ENCODE measurements at regions of chr11 and their contacts with region 1.

Region 1: DNA sequence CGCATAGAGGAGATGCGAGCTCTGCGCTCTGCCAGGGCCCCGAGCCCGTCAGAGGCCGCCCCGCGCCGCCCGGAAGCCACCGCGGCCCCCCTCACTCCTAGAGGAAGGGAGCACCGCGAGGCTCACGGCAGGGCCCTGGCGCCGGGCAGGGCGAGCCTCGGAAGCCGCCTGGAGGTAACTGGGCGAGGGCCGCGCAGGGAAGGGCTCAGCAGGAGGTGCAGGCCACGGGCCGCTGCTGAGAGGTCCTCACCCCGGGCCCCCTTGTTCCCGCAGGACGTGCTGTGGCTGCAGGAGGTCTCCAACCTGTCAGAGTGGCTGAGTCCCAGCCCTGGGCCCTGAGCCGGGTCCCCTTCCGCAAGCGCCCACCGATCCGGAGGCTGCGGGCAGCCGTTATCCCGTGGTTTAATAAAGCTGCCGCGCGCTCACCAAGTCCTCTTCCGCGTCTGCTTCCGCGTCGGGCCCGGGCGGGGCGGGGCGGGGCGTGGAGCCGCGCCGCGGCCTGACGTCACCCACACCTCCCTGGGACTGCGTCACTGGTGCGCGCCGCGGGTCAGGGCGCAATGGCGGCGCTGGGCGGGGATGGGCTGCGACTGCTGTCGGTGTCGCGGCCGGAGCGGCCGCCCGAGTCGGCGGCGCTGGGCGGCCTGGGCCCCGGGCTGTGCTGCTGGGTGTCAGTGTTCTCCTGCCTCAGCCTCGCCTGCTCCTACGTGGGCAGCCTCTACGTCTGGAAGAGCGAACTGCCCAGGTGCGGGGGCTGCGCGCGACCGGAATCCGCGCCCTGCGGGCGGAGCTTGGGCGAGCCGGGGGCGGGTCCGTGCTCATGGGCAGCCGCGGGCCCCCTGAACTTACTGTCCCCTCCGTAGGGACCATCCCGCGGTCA is at the start of gene RCE1:
- DNase-seq: peak; percentile 85 to 93 (median 90)
- H3K4me3 ChIP-seq: peak within 1 kb of the TSS; percentile 88 to 96
- H3K4me3 Mint-ChIP-seq: peak within 1 kb of the TSS; percentile 87 to 96 (median 93)
- H3K27ac ChIP-seq: peak within 1 kb of the TSS; percentile 97
- H3K27ac Mint-ChIP-seq: peak within 1 kb of the TSS; percentile 91 to 98 (median 96)
- H3K4me1 ChIP-seq: peaks cover 50% of the 10 kb centered on the region
- H3K4me1 Mint-ChIP-seq: peaks cover 33 to 55% (median 44%) of the 10 kb centered on the region in 4 donors
- H3K27me3 ChIP-seq: no peaks in the 10 kb centered on the region
- H3K27me3 Mint-ChIP-seq: no peaks in the 10 kb centered on the region
- total RNA-seq, gene RCE1: 30.0 to 34.5 TPM

Region 2: DNA sequence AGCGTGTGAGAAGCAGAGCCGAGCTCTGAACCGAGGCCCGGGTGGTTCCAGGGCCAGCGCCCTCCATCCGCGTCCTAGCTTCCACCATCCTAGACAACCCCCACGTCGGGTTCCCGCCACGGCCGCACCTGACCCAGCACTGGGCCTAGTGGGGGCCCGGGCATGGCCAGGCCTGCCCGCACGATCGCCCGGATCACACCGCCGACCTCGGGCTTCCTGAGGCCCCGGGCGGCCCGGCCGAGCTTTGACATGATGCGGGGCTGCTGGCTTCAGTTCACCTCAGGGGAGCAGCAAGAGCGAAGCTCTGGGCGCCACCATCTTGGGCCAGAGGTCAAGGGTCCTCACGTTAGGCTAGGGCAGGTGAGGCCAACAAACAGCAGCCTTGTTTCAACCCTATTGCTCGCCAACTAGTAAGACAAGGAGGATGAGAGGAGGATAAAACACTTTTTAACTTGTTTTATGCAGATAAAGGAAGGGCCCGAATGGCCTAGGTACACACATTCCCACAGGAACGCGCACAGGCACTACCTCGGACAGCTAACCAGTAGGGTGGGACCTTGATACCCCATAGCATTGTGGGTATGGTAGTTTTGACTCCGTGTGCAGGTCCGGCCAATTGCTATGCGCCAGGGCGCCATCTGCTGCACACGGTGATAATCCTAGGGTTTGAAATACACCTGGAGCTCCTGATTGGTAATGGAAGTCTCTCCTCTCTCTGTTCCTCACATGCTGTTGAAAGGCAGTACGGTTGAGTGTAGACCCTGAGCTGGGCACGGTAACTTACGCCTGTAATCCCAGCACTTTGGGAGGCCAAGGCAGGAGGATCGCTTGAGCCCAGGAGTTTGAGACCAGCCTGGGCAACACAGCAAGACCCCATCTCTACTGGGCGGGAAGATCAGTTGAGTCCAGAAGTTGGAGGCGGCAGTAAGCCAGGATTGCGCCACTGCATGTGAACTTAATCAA is 404.4 kb before region 1 on chr11 and contains the start of gene MRPL11:
- CTCF ChIA-PET with region 1: no interaction called
- POLR2A ChIA-PET with region 1: interaction called, 10 read pairs
- intact Hi-C with region 1: loop called (anchors 2 kb)
- DNase-seq: peak; percentile 89 to 92 (median 91)
- H3K4me3 ChIP-seq: peak within 1 kb of the TSS; percentile 67 to 88
- H3K4me3 Mint-ChIP-seq: peak within 1 kb of the TSS; percentile 87 to 94 (median 91)
- H3K27ac ChIP-seq: peak within 1 kb of the TSS; percentile 69
- H3K27ac Mint-ChIP-seq: peak within 1 kb of the TSS; percentile 88 to 100 (median 98)
- H3K4me1 ChIP-seq: peaks cover 7% of the 10 kb centered on the region
- H3K4me1 Mint-ChIP-seq: peaks cover 6 to 17% (median 11%) of the 10 kb centered on the region in 4 donors
- H3K27me3 ChIP-seq: no peaks in the 10 kb centered on the region
- H3K27me3 Mint-ChIP-seq: peaks cover 2 to 3% of the 10 kb centered on the region in 2 donors
- total RNA-seq, gene MRPL11: 22.0 to 27.9 TPM

Region 3: DNA sequence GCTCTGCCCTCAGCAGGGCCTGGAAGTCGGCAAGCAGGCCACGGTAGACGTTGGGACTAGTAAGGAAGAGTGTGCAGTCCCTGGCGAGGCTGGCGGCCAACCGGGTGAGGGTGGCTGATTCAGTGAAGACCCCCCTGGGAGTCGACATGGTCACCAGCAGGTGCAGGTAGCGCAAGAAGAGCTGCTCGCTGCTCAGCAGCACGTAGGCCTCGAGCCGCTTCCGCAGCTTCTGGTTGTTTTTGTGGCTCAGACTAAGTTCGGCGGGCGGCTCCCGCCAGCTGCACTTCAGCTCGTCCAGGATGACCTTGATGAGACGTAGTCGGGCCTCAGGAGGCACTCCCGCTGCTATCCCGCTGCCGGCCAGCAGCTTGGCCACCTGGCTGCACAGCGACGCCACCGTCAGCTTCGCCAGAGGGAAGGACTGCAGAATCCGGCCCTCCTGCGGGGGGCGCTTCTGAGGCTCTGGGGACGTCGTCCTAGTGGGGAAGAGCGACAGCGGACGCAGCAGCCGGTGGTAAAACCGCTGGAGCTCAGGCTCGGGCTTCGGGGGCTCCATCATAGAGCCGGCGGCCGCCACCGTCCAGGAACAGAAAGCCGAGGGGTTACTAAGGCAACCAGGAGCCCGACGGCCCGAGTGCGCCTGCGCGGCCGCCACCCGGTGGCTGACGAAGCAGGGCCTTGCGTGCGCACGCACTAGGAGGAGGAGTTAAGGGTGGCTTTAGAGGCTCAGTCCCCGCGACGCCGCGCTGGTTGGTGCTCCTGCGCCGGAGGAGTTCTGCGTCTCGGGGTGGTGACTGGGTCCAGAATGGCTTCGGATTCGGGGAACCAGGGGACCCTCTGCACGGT is 250.5 kb before region 1 on chr11 and contains the starts of genes CCDC87 and CCS:
- CTCF ChIA-PET with region 1: no interaction called
- POLR2A ChIA-PET with region 1: no interaction called
- intact Hi-C with region 1: loop called (anchors 2 kb)
- DNase-seq: peak; percentile 95 to 98 (median 97)
- H3K4me3 ChIP-seq: peak within 1 kb of the TSS; percentile 71 to 98
- H3K4me3 Mint-ChIP-seq: peak within 1 kb of the TSS; percentile 98 to 100 (median 99)
- H3K27ac ChIP-seq: peak within 1 kb of the TSS; percentile 88
- H3K27ac Mint-ChIP-seq: peak within 1 kb of the TSS; percentile 96 to 100 (median 100)
- H3K4me1 ChIP-seq: peaks cover 35% of the 10 kb centered on the region
- H3K4me1 Mint-ChIP-seq: peaks cover 16 to 42% (median 27%) of the 10 kb centered on the region in 4 donors
- H3K27me3 ChIP-seq: no peaks in the 10 kb centered on the region
- H3K27me3 Mint-ChIP-seq: no peaks in the 10 kb centered on the region
- total RNA-seq, gene CCDC87: not detected
- total RNA-seq, gene CCS: 61.0 to 61.5 TPM

Region 4: GRCh38 chr11:66694732-66695207 is 148.4 kb before region 1 on chr11:
- CTCF ChIA-PET with region 1: interaction called, 13 read pairs
- POLR2A ChIA-PET with region 1: no interaction called
- intact Hi-C with region 1: no loop called
- DNase-seq: peak; percentile 76 to 86 (median 79)
- H3K4me3 ChIP-seq: no peak overlapping the region
- H3K4me3 Mint-ChIP-seq: no peak overlapping the region
- H3K27ac ChIP-seq: no peak overlapping the region
- H3K27ac Mint-ChIP-seq: no peak overlapping the region
- H3K4me1 ChIP-seq: no peaks in the 10 kb centered on the region
- H3K4me1 Mint-ChIP-seq: no peaks in the 10 kb centered on the region
- H3K27me3 ChIP-seq: no peaks in the 10 kb centered on the region
- H3K27me3 Mint-ChIP-seq: peaks cover 2% of the 10 kb centered on the region in 2 donors

Region 5: DNA sequence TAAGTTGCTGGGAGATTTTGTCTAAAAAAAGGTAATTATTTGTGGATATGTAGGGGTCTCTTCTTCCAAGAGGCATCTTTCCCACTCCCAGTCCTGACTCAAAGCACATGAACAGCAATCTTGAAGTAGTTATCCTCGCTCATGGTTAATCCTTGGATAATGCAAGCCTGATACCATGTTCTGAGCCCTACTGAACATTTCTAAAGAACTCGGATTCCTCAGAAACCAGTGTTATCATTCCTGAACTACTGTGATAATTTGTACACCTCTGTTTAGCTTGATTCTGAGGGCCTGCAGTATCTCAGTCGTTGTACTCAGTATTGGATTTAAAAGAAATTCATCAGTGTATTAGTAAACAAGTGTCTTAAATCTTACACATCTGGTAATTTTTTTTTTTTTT is 22.2 kb before region 1 on chr11:
- CTCF ChIA-PET with region 1: no interaction called
- POLR2A ChIA-PET with region 1: no interaction called
- intact Hi-C with region 1: no loop called
- DNase-seq: no peak
- H3K4me3 ChIP-seq: no peak overlapping the region
- H3K4me3 Mint-ChIP-seq: no peak overlapping the region
- H3K27ac ChIP-seq: no peak overlapping the region
- H3K27ac Mint-ChIP-seq: no peak overlapping the region
- H3K4me1 ChIP-seq: no peaks in the 10 kb centered on the region
- H3K4me1 Mint-ChIP-seq: no peaks in the 10 kb centered on the region
- H3K27me3 ChIP-seq: no peaks in the 10 kb centered on the region
- H3K27me3 Mint-ChIP-seq: no peaks in the 10 kb centered on the region

Region 6: GRCh38 chr11:66855574-66856495 is 12.7 kb after region 1 on chr11:
- CTCF ChIA-PET with region 1: interaction called, 4 read pairs
- POLR2A ChIA-PET with region 1: interaction called, 122 read pairs
- intact Hi-C with region 1: loop called (anchors 1 kb)
- DNase-seq: peak in 4 of 5 donors; percentile 71 to 79 (median 74)
- H3K4me3 ChIP-seq: peak overlapping the region; percentile 23 to 73
- H3K4me3 Mint-ChIP-seq: peak overlapping the region; percentile 73 to 91 (median 88)
- H3K27ac ChIP-seq: peak overlapping the region; percentile 60
- H3K27ac Mint-ChIP-seq: peak overlapping the region; percentile 38 to 85 (median 81)
- H3K4me1 ChIP-seq: peaks cover 6% of the 10 kb centered on the region
- H3K4me1 Mint-ChIP-seq: peaks cover 2 to 34% (median 17%) of the 10 kb centered on the region in 4 donors
- H3K27me3 ChIP-seq: no peaks in the 10 kb centered on the region
- H3K27me3 Mint-ChIP-seq: no peaks in the 10 kb centered on the region

Region 7: GRCh38 chr11:66936311-66936711 is 93.2 kb after region 1 on chr11:
- CTCF ChIA-PET with region 1: no interaction called
- POLR2A ChIA-PET with region 1: no interaction called
- intact Hi-C with region 1: no loop called
- DNase-seq: no peak
- H3K4me3 ChIP-seq: no peak overlapping the region
- H3K4me3 Mint-ChIP-seq: no peak overlapping the region
- H3K27ac ChIP-seq: no peak overlapping the region
- H3K27ac Mint-ChIP-seq: no peak overlapping the region
- H3K4me1 ChIP-seq: no peaks in the 10 kb centered on the region
- H3K4me1 Mint-ChIP-seq: no peaks in the 10 kb centered on the region
- H3K27me3 ChIP-seq: no peaks in the 10 kb centered on the region
- H3K27me3 Mint-ChIP-seq: peaks cover 0 to 2% of the 10 kb centered on the region in 2 donors

Region 8: GRCh38 chr11:66958232-66958955 is 115.3 kb after region 1 on chr11 and contains the start of gene PC:
- CTCF ChIA-PET with region 1: no interaction called
- POLR2A ChIA-PET with region 1: interaction called, 5 read pairs
- intact Hi-C with region 1: loop called (anchors 1 kb)
- DNase-seq: peak; percentile 96 to 99 (median 98)
- H3K4me3 ChIP-seq: peak within 1 kb of the TSS; percentile 76 to 77
- H3K4me3 Mint-ChIP-seq: peak within 1 kb of the TSS; percentile 87 to 93 (median 92)
- H3K27ac ChIP-seq: peak within 1 kb of the TSS; percentile 19
- H3K27ac Mint-ChIP-seq: peak within 1 kb of the TSS; percentile 56 to 94 (median 88)
- H3K4me1 ChIP-seq: peaks cover 21% of the 10 kb centered on the region
- H3K4me1 Mint-ChIP-seq: peaks cover 15 to 38% (median 16%) of the 10 kb centered on the region in 4 donors
- H3K27me3 ChIP-seq: no peaks in the 10 kb centered on the region
- H3K27me3 Mint-ChIP-seq: peaks cover 0 to 1% of the 10 kb centered on the region in 2 donors
- total RNA-seq, gene PC: 7.6 to 7.7 TPM